GM12878 (cell line): ENCODE measurements at regions of chr4 and their contacts with region 1.

Region 1: GRCh38 chr4:174928174-174928573 is 10.0 kb downstream of the ADAM29 start:
- DNase-seq: peak; percentile 89
- ATAC-seq: peak; percentile 82
- H3K4me3 ChIP-seq: no peak overlapping the region
- H3K27ac ChIP-seq: peak overlapping the region; percentile 89
- H3K4me1 ChIP-seq: peaks cover 13% of the 10 kb centered on the region
- H3K27me3 ChIP-seq: no peaks in the 10 kb centered on the region
- CTCF ChIP-seq: no peak
- EP300 ChIP-seq: peak; percentile 63 to 97
- POLR2A ChIP-seq: no peak
- RAD21 ChIP-seq: no peak

Region 2: GRCh38 chr4:174835536-174835935 is 92.6 kb before region 1 on chr4:
- CTCF ChIA-PET with region 1: no interaction called
- POLR2A ChIA-PET with region 1: no interaction called
- RAD21 ChIA-PET with region 1: no interaction called
- SMC1A ChIA-PET with region 1: no interaction called
- in situ Hi-C with region 1: no loop called
- intact Hi-C with region 1: no loop called
- DNase-seq: no peak
- ATAC-seq: no peak
- H3K4me3 ChIP-seq: no peak overlapping the region
- H3K27ac ChIP-seq: no peak overlapping the region
- H3K4me1 ChIP-seq: no peaks in the 10 kb centered on the region
- H3K27me3 ChIP-seq: no peaks in the 10 kb centered on the region
- CTCF ChIP-seq: no peak
- EP300 ChIP-seq: no peak
- POLR2A ChIP-seq: no peak
- RAD21 ChIP-seq: no peak

Region 3: DNA sequence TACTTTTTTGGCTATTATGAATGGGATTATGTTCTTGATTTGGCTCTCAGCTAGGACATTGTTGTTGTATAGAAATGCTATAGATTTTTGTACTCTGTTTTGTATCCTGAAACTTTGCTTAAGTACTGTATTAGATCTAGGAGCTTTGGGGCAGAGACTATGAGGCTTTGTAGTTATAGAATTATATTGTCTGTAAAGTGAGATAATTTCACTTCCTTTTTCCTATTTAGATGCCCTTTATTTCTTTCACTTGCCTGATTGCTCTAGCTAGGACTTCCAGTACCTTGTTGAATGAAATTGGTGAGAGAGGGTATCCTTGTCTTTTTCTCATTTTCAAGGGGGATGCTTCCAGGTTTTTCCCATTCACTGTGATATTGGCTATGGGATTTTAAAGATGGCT is 18.1 kb after region 1 on chr4:
- CTCF ChIA-PET with region 1: interaction called, 6 read pairs
- POLR2A ChIA-PET with region 1: interaction called, 4 read pairs
- RAD21 ChIA-PET with region 1: interaction called, 4 read pairs
- SMC1A ChIA-PET with region 1: interaction called, 19 read pairs
- in situ Hi-C with region 1: no loop called
- intact Hi-C with region 1: no loop called
- DNase-seq: no peak
- ATAC-seq: peak; percentile 84
- H3K4me3 ChIP-seq: no peak overlapping the region
- H3K27ac ChIP-seq: no peak overlapping the region
- H3K4me1 ChIP-seq: no peaks in the 10 kb centered on the region
- H3K27me3 ChIP-seq: no peaks in the 10 kb centered on the region
- CTCF ChIP-seq: no peak
- EP300 ChIP-seq: 0 out of 4 replicates have a peak, but pooled peaks of 1 of the 2 experiments have one; percentile 19
- POLR2A ChIP-seq: no peak
- RAD21 ChIP-seq: no peak